ENCODE measurements at regions of chr18 and their contacts with region 1.

Region 1: DNA sequence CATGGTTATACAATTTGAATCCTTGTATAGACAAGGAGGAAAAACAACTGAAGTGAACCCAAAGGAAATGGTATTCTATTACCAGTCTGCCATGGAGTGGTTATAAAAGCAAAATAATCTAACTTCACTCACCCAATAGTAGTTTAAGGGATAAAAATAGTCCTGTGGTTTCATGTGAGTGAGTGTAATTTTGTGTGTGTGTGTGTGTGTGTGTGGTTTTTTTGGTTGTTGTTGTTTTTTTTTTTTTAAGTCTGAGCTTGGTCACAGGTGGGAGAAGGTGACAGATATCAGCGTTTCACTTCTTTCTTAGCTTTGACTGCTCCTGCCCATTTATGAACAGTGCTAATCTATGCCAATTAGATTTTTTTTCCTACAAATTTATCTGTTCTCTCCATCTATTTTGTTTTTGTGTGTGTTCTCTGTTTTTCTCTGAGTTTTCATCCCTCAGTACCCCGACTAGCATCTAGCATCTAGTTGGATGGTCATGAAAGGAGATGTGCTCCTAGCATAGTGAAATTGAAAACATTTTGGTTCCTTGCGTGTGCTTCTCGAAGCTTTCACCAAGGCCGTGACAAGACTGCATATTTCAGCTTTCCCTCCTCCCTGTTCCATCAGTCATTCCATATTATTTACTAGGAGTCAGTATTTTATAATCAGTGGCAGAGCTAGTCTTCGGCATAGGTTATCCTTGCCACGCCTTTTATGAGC is 200.1 kb upstream of the DTNA start:
- DNase-seq: no peak
- H3K4me3 ChIP-seq: no peak overlapping the region
- H3K27ac ChIP-seq: no peak overlapping the region
- H3K4me1 ChIP-seq: no peaks in the 10 kb centered on the region
- H3K27me3 ChIP-seq: no peaks in the 10 kb centered on the region
- CTCF ChIP-seq: no peak
- POLR2A ChIP-seq: no peak

Region 2: GRCh38 chr18:36309436-36310391 is 1799.7 kb after region 1 on chr18:
- intact Hi-C with region 1: loop called (anchors 10 kb)
- DNase-seq: peak; percentile 77 to 82
- H3K4me3 ChIP-seq: peak overlapping the region in 2 of 3 donors; percentile 3 to 41
- H3K27ac ChIP-seq: peak overlapping the region; percentile 69 to 89
- H3K4me1 ChIP-seq: no peaks in the 10 kb centered on the region
- H3K27me3 ChIP-seq: no peaks in the 10 kb centered on the region
- CTCF ChIP-seq: no peak
- POLR2A ChIP-seq: no peak

Region 3: DNA sequence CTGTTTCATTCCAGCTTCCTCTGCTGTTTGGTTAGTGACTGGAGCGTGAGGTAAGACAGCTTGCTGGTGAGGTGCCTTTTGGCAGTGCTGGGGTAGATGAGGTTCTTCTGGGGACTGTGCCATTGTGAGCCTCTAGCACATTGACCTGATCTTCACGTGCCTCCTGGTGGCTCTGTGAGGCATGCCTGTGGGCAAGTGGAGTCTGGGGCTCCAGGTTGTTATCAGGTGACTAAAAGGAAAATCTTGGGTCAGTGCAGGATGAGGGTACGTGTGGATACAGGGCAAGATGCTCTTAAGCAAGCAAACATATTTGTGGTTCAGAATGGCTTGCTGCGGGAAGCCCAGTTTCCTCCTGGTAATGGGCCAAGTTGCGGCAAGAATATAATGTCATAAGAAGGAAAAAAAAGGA is 1862.9 kb after region 1 on chr18:
- intact Hi-C with region 1: loop called (anchors 5 kb)
- DNase-seq: peak in 1 of 2 donors; percentile 46
- H3K4me3 ChIP-seq: no peak overlapping the region
- H3K27ac ChIP-seq: no peak overlapping the region
- H3K4me1 ChIP-seq: peaks cover 0 to 5% of the 10 kb centered on the region in 2 donors
- H3K27me3 ChIP-seq: no peaks in the 10 kb centered on the region
- CTCF ChIP-seq: no peak
- POLR2A ChIP-seq: no peak

Measured in breast epithelium (tissue), 4 donors.